GM13977 (cell line): ENCODE measurements at regions of chr6 and their contacts with region 1.

Region 1: DNA sequence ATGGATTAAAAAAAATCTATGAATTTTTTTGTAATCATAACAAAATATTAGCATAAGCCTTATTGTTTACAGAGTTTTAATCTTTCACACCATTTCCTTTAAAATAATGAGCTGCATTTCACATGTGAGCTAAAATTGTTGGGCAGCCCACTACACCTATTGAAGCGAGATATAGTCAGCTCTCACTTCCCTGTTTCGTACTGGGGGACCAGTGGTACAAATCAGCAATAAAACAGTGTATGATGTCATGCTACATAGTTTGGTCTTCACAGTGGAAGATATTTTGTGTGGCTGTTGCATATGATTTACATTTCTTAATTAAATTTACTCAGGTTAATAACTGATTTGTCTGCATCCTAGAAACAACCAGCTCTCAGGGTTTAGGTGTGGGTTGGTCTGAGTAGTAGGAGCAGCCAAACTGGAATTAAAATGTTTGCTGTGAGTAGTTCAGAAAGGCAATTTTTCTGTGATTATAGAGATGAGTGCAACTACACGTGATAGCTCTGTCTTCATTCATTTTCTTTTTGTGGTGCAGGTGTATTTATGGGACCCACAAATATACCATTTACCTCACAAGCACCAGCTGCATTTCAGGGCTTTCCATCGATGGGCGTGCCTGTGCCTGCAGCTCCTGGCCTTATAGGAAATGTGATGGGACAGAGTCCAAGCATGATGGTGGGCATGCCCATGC is 99.3 kb downstream of the B3GAT2 start:
- DNase-seq: peak; percentile 55
- CTCF ChIP-seq: no peak

Region 2: GRCh38 chr6:70547313-70547712 is 310.2 kb before region 1 on chr6:
- in situ Hi-C with region 1: loop called (anchors 25 kb)
- DNase-seq: no peak
- CTCF ChIP-seq: peak; percentile 44

Region 3: DNA sequence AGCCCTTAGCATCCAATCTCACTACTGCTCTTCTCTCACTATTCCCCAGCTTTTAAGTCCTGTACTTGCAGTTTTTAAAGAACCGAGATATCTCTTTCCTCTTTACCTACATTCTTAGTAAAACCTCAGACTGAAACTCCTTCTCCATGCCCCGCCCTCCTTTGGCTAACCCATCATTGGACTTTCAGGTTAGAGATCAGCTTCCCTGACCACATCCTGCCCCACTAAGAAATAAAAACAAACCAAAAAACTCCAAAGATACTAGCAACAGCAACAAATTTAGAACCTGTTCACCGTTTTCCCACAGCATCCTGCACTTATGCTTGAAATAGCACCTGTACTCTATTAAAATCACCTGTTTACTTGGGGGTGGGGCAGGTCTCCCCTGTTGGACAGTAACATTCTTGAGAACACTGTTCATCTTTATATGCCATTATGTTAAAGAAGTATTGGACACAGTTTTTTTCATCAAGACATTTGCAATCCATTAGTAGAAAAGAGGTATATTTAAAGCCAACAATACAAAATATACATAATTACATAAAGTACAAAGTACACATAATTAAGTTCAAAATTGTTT is 206.1 kb before region 1 on chr6:
- in situ Hi-C with region 1: no loop called
- DNase-seq: no peak
- CTCF ChIP-seq: no peak

Region 4: DNA sequence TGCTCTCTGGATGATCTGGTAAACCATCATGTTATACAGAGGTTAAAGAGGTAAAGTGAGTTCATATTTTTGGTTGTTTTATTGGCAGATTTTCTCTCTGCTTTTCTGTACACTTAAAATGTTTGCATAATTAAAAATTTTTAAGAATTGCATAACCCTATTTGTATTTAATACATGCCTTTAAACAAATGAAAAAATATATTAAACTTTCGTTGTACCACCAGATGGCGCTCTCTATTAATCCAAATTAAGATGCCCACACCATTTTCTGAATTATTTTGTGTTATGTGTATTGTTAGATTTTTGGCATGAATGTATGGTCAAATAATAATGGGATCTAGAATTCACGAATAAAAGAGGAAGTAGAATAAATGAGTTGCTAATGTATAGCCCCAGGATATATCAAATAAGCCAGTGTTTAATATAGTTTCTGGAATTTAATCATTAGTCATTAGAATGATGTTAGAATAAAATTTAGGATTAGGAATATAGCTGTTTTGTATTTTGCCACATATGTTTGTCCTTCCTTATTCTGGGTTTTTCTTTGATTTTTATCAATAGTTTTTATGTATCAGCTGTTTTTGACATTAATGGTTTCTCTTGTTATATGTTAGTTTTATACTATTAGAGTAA is 150.9 kb before region 1 on chr6:
- in situ Hi-C with region 1: loop called (anchors 10 kb)
- DNase-seq: no peak
- CTCF ChIP-seq: peak; percentile 43

Region 5: DNA sequence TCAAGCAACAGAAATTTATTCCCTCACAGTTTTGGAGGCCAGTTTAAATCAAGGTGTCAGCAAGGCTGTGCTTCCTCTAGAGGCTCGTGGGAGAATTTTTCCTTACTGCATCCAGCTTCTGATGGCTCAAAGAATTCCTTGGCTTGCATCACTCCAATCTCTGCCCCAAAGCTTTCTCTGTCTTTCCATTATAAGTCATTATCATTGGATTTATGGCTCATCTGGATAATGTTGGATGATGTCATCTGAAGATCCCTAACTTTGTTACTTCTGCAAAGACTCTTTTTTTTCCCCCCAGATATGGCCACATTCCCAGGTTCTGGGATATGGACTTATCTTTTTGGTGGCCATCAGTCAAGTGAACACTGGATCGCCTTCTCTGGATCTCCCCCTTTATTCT is 245.6 kb after region 1 on chr6:
- in situ Hi-C with region 1: no loop called
- DNase-seq: no peak
- CTCF ChIP-seq: no peak